Psoas muscle (tissue), 8 donors: ENCODE measurements at regions of chr20 and their contacts with region 1.

Region 1: DNA sequence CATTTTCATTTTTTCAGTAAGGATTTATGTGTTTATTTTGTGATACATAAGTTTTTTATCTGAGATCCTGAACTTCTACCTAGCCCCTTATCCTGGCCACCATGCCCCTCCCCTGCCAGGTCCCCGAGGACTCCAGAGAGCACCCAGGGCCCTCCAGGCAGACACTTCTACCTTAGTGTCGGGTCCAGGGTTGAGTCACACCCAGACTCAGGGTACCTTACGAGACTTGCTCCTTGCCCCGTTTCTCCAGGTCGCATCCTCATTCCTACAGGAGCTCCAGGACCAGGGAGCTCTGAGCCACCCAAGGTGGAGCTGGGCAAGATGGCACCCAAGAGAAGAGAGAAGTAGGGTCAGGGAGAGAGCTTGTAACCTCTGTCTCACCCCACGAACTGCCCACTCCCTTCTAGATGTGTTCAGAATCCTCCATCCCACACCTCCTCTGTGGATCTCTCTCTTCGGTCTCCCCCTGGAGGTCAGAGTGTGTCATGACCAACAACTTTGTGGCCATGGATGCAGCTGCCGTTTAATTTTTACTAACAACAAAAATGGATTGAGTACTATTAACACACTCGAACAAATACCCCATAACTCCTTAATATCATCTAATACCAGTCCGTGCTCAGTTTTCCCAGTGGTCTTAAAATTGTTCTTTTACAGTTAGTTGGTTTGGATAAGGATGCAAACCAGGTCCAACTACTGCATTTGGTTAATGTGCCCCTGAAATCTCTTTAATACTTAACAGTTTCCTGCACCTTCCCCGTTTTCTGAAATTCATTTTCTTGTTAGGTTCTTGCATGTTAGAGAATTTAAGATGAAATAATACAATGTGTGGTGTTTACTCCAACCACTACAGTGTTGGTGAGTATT is 130.6 kb upstream of the INSM1 start:
- DNase-seq: peak in 1 of 2 donors; percentile 52
- ATAC-seq: peak; percentile 73 to 81 (median 79)
- H3K4me3 ChIP-seq: no peak overlapping the region
- H3K27ac ChIP-seq: no peak overlapping the region
- H3K4me1 ChIP-seq: peaks cover 7% of the 10 kb centered on the region
- H3K27me3 ChIP-seq: no peaks in the 10 kb centered on the region
- CTCF ChIP-seq: peak; percentile 79

Region 2: DNA sequence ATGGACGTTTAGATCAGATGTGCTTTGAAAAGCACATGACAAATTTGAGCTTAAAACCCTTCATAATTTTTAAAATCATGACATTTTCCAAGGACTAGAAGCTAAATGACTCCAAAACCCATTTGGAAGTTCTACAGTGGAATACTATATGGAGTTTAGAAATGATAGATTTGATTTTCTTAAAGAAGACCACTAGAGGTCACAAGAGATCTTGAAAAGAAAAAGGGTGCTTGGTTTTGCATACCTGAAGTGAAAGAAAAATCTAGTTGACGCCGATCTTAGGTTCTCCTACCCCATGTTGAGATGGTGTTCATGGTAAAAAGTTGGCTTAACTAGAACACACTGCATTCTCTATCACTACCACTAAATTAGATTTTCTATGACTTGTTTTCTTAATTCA is 153.5 kb before region 1 on chr20:
- intact Hi-C with region 1: loop called (anchors 1 to 5 kb)
- DNase-seq: no peak
- ATAC-seq: peak; percentile 18 to 43 (median 22)
- H3K4me3 ChIP-seq: peak overlapping the region; percentile 60
- H3K27ac ChIP-seq: peak overlapping the region; percentile 94
- H3K4me1 ChIP-seq: peaks cover 16% of the 10 kb centered on the region
- H3K27me3 ChIP-seq: no peaks in the 10 kb centered on the region
- CTCF ChIP-seq: peak; percentile 65

Region 3: GRCh38 chr20:20130399-20130798 is 106.9 kb before region 1 on chr20:
- intact Hi-C with region 1: loop called in 1 of 2 experiments (anchors 10 kb)
- DNase-seq: no peak
- ATAC-seq: peak in 3 of 4 donors; percentile 69 to 88 (median 83)
- H3K4me3 ChIP-seq: no peak overlapping the region
- H3K27ac ChIP-seq: no peak overlapping the region
- H3K4me1 ChIP-seq: no peaks in the 10 kb centered on the region
- H3K27me3 ChIP-seq: no peaks in the 10 kb centered on the region
- CTCF ChIP-seq: no peak

Region 4: GRCh38 chr20:20148779-20149178 is 88.5 kb before region 1 on chr20:
- intact Hi-C with region 1: loop called in 1 of 2 experiments (anchors 10 kb)
- DNase-seq: no peak
- ATAC-seq: peak in 3 of 4 donors; percentile 40 to 79 (median 53)
- H3K4me3 ChIP-seq: no peak overlapping the region
- H3K27ac ChIP-seq: peak overlapping the region; percentile 5
- H3K4me1 ChIP-seq: peaks cover 19% of the 10 kb centered on the region
- H3K27me3 ChIP-seq: no peaks in the 10 kb centered on the region
- CTCF ChIP-seq: no peak

Region 5: DNA sequence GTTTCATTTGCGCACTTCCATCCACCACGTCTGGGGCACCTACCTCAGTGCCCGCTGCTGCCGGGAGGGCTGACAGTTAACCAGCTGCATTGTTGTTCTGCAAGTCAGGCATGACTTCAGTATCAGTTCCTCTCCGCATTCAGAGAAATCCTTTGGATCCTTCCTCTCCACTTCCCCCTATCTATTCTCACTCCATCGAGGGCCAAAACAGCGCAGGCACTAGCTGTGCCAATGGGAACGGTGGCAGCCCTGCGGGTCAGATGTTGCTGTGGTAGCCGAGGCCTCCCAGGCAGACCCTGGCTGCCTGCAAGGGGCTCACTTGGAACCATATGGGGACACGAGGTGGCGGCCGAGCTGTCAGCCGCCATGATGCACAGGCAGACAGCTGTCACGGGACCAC is 66.4 kb after region 1 on chr20:
- intact Hi-C with region 1: no loop called
- DNase-seq: peak; percentile 34 to 60
- ATAC-seq: peak in 1 of 4 donors; percentile 51
- H3K4me3 ChIP-seq: no peak overlapping the region
- H3K27ac ChIP-seq: no peak overlapping the region
- H3K4me1 ChIP-seq: no peaks in the 10 kb centered on the region
- H3K27me3 ChIP-seq: peaks cover 0 to 2% (median 0%) of the 10 kb centered on the region in 3 donors
- CTCF ChIP-seq: no peak